AG04450 (cell line): ENCODE measurements at regions of chr3 and their contacts with region 1.

Region 1: GRCh38 chr3:141913150-141913811 is 36.8 kb downstream of the ATP1B3 start:
- DNase-seq: no peak
- H3K4me3 ChIP-seq: no peak overlapping the region
- H3K27ac ChIP-seq: no peak overlapping the region
- H3K27me3 ChIP-seq: no peaks in the 10 kb centered on the region
- CTCF ChIP-seq: peak; percentile 70

Region 2: DNA sequence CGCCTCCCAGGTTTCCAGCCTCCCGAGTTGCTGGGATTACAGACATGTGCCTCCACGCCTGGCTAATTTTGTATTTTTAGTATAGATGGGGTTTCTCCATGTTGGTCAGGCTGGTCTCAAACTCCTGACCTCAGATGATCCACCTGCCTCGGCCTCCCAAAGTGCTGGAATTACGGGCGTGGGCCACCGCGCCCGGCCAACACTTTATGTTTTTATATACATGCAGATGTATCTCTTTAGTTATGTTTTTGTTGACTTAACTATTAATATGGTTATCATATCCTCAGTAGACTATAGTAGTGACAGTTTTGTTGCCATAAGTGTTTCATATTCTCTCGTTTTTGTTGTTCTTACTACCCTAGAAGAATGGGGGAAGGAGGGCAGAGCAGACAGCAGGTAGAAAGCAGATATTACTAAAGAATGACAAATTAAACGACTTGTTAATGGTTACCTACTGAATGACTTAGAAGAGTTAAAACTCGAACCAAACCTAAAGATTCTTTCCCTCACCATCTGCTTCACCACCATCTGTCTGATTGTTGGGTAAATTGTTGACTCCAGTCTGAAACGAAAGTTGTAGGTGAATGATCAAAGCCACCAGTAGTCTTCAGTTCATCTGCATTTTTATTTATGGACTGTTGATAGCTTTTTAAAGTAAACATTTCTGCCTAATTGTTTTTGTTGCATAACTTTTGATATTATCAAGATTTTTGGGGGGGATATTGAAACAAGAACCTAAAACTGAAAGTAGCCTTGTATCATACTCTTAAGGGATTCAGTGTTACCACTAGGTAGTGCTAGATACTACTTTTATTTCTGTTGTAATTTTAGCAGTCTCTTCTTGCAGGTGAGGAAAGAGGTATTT is 337.2 kb before region 1 on chr3:
- CTCF ChIA-PET with region 1: interaction called, 33 read pairs
- POLR2A ChIA-PET with region 1: no interaction called
- DNase-seq: no peak
- H3K4me3 ChIP-seq: no peak overlapping the region
- H3K27ac ChIP-seq: no peak overlapping the region
- H3K27me3 ChIP-seq: no peaks in the 10 kb centered on the region
- CTCF ChIP-seq: peak; percentile 64

Region 3: GRCh38 chr3:141738022-141738890 is 175.0 kb before region 1 on chr3 and contains the start of gene RNF7:
- CTCF ChIA-PET with region 1: interaction called, 11 read pairs
- POLR2A ChIA-PET with region 1: no interaction called
- DNase-seq: peak; percentile 87
- H3K4me3 ChIP-seq: peak within 1 kb of the TSS; percentile 94
- H3K27ac ChIP-seq: peak within 1 kb of the TSS; percentile 71
- H3K27me3 ChIP-seq: no peaks in the 10 kb centered on the region
- CTCF ChIP-seq: peak; percentile 73
- polyA plus RNA-seq, gene RNF7: 97.1 and 113 TPM in 2 replicates

Region 4: DNA sequence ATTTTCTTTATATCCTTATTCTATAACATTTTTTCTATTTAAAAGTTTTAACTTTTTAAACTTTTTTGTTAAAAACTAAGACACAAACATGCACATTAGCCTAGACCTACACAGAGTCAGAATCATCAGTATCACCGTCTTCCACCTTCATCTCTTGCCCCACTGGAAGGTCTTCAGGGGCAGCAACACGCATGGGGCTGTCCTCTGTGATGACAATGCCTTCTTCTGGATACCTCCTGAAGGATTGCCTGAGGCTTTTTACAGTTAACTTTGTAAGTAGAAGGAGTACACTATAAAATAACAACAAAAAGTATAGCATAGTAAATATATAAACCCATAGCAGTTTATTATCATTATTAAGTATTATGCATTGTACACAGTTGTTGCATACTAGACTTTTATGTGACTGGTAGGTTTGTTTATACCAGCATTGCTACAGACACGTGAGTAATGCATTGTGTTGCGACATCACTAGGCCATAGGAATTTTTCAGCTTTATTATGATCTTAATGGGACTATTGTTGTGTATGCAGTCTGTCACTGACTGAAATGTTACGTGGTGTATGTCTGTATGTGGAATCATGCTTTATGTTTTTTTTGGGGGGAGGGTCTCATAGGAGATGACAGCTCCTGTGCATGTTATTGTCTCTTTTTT is 18.6 kb before region 1 on chr3:
- CTCF ChIA-PET with region 1: interaction called, 41 read pairs
- POLR2A ChIA-PET with region 1: no interaction called
- DNase-seq: peak; percentile 63
- H3K4me3 ChIP-seq: no peak overlapping the region
- H3K27ac ChIP-seq: no peak overlapping the region
- H3K27me3 ChIP-seq: no peaks in the 10 kb centered on the region
- CTCF ChIP-seq: no peak

Region 5: GRCh38 chr3:141926929-141927328 is 13.6 kb after region 1 on chr3:
- CTCF ChIA-PET with region 1: interaction called, 24 read pairs
- POLR2A ChIA-PET with region 1: no interaction called
- DNase-seq: no peak
- H3K4me3 ChIP-seq: no peak overlapping the region
- H3K27ac ChIP-seq: no peak overlapping the region
- H3K27me3 ChIP-seq: no peaks in the 10 kb centered on the region
- CTCF ChIP-seq: no peak